ENCODE measurements at regions of chr19 and their contacts with region 1.

Region 1: DNA sequence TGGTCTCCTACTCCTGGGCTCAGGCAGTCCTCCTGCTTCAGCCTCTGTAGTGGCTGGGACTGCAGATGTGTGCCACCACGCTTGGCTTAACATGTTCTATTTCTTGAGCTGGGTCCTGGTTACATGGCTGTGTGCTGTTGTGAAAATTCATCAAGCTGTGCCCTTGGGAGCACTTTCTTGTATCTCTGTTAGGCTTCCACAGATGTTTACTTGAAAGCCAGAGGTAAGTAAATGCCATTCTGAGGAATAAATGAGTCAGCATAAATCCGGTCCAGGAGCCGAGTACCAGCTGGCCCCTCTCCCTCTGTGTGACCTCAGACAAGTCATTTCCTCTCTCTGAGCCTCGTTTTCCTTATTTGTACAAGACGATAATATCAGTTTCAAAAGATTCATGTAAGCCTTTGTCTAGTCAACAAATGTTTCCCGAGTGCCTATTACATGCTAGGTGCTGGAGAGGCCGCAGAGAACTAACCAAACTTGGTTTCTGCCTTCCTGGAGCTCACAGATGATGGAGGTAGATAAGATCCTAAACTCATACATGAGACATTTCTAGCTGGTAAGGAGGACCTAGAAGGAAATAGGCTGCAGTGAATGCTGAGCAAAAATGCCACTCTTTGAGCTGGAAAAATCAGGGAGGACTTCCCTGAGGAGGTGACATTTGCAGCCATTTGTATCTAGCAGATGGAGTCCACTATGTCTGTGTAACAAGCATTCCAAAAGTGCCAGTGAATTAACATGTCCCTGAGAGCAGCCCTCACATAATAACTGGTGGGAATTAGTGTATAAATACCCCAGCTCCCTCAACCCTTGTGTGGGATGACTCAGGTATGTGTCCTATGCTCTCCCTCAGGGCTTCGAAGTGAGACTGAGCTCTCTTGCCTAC is 2.7 kb upstream of the RASAL3 start:
- DNase-seq: peak; percentile 48
- ATAC-seq: peak; percentile 51
- H3K4me3 Mint-ChIP-seq: peak overlapping the region; percentile 54
- H3K27ac Mint-ChIP-seq: peak overlapping the region; percentile 90
- H3K4me1 Mint-ChIP-seq: peaks cover 52% of the 10 kb centered on the region
- H3K27me3 Mint-ChIP-seq: peaks cover 5% of the 10 kb centered on the region

Region 2: DNA sequence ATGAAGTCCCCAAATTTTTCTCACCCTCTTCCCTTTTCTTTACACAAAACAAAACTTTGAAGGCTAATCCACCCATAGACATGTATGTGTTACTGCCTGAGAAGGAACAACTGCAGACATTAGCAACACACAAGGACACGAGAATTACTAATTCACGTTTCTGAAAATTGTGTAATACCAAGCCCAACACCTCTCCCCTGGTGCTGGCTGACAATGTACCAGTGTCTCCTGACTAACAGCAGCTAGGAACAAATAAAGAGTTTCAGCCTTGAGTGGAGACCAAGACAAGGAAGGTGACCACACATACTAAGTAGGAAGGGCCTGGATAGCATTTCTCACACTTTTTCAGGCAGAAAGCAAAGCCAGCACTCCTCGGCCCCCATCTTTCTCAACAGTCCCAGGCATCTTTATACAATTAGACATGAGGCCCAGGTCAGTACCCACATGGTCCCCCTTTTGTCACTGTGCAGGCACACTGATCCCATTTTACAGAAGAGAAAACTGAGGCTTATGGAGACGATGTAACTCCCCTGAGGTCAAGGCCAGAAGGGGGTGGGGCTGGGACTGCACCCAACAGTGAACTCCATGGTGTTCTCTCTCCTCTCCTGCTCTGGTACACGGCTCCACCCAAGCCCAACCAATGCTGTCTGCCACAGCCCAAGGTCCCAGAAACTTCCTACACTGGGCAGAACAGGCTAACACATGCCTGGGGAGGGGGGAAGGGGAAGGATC is 143.4 kb before region 1 on chr19:
- POLR2A ChIA-PET with region 1: no interaction called
- DNase-seq: no peak
- ATAC-seq: no peak
- H3K4me3 Mint-ChIP-seq: no peak overlapping the region
- H3K27ac Mint-ChIP-seq: peak overlapping the region; percentile 55
- H3K4me1 Mint-ChIP-seq: peaks cover 53% of the 10 kb centered on the region
- H3K27me3 Mint-ChIP-seq: no peaks in the 10 kb centered on the region

Region 3: DNA sequence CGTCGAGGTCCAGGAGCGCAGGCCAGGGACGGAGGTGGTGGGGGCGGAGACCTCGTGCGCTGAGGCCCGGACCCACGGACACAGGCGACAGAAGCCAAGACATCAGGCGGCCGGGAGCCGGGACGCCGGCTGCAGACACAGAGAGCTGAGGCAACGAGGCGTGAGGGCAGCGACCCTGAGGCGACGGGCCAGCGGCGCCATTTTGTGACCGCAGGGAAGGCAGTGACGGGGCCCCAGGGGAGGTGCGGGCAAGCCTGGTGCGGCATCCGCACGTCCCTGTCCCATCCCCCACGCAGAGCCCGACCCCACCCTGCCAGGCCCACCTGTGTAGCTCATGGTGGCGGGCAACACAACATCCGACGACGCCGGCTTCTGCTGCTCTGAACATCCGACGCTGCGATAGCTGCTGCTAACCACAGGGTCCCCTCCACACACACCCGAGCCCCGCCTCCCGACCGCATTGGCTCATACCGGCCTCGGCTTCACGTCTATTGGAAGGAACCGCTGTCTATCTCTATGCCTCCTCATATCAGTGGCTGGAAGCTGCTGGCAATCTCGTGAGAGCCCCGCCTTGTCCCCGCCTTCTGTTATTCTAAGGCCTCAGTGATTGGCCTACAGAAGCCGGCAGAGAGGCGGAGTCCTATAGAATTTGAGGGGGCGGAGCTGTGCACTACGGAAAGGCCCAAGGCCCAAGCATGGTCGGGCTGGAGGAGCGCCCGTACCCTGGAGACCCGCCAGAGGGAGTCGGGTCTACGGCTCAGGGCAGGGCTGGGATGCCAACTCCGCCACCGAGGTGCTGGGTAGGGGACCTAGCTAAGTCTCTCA is 48.3 kb before region 1 on chr19 and contains the start of gene AKAP8L:
- POLR2A ChIA-PET with region 1: interaction called, 30 read pairs
- DNase-seq: peak; percentile 96
- ATAC-seq: peak; percentile 94
- H3K4me3 Mint-ChIP-seq: peak within 1 kb of the TSS; percentile 98
- H3K27ac Mint-ChIP-seq: peak within 1 kb of the TSS; percentile 100
- H3K4me1 Mint-ChIP-seq: peaks cover 25% of the 10 kb centered on the region
- H3K27me3 Mint-ChIP-seq: no peaks in the 10 kb centered on the region
- total RNA-seq, gene AKAP8L: 146 to 149 TPM

Region 4: GRCh38 chr19:15449620-15450527 is 17.2 kb before region 1 on chr19 and contains the start of gene WIZ:
- POLR2A ChIA-PET with region 1: interaction called, 11 read pairs
- DNase-seq: peak; percentile 92
- ATAC-seq: peak; percentile 68
- H3K4me3 Mint-ChIP-seq: peak within 1 kb of the TSS; percentile 83
- H3K27ac Mint-ChIP-seq: peak within 1 kb of the TSS; percentile 89
- H3K4me1 Mint-ChIP-seq: peaks cover 25% of the 10 kb centered on the region
- H3K27me3 Mint-ChIP-seq: no peaks in the 10 kb centered on the region
- total RNA-seq, gene WIZ: 28.4 to 29.3 TPM

Region 5: DNA sequence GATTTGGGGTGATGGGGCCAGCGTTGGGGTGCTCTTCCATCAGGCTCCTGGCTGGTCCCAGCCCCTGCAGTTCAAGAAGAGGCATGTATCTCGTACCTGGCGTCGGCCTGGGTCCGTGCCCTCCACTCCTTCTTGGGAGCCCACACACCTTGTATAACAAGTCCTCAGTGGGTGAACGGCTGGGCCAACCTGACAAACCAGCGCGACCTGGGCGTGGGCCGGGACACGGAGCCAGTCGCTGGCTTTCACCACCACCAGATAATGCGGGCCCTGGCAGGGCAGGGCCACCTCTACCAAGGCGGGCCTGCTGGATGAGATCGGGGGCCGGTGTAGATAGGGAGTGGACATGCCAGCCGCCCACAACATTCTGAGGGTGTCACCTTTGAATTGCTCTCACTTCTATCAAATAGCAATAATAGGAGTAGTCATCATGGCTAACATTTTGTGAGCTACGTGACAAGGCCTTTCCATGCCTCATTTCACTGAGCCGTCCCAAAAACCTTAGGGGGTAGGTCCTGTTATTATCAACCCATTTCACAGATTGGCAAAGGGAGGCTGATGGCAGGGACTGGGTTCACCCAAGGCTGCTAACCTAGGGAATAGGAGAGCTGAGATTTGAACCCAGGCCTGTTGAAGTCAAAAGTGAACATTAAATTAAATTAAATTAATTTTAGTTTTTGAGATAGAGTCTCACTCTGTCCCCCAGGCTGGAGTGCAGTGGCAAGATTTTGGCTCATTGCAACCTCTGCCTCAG is 44.8 kb after region 1 on chr19:
- POLR2A ChIA-PET with region 1: interaction called, 18 read pairs
- DNase-seq: no peak
- ATAC-seq: no peak
- H3K4me3 Mint-ChIP-seq: no peak overlapping the region
- H3K27ac Mint-ChIP-seq: no peak overlapping the region
- H3K4me1 Mint-ChIP-seq: peaks cover 32% of the 10 kb centered on the region
- H3K27me3 Mint-ChIP-seq: peaks cover 23% of the 10 kb centered on the region

Measured in activated naive CD8-positive, alpha-beta T cell treated with anti-CD3 and anti-CD28 coated beads, Interleukin-2, amount 10 ng/mL, durations not matched to agents 7 days and 5 days (primary cell).